CD8-positive, alpha-beta memory T cell (primary cell): ENCODE measurements at regions of chr11 and their contacts with region 1.

Region 1: DNA sequence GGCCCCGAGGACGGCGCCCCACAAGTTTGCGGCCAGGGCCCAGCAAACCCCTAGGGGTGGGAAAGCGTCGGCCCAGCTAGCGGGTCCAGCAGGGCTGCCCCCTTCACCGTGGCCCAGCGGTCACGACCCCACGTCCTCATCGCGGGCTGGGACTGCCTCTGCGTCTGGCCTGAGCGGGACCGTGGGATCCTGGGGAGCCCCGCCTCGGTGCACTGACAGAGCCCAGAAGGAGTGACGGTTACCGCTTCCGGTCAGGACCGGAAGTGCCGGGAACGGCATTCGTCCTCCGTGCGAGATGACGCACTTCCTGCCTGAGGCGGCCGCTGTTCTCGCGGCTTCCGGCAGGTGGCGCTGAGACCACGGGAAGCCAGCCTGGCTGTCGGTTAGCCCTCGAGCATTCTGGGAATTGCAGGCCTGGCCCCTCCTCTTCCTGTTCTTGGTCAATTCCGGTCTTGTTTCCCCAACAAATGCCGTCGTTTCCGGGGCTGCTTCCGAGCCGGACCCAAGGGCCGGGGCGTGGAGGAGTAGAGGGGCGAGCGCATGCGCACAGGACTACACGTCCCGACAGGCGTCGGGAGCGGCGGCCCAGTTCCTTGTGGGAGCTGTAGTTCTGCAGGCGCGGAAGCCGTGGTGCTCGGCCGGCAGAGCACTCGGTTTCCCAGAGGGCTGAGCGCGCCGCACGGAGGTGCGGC is at the start of gene TSSC4:
- DNase-seq: peak; percentile 99 to 100 (median 100)
- H3K4me3 ChIP-seq: peak within 1 kb of the TSS; percentile 89
- H3K4me3 Mint-ChIP-seq: peak within 1 kb of the TSS; percentile 88 to 99 (median 91)
- H3K27ac ChIP-seq: peak within 1 kb of the TSS; percentile 97
- H3K27ac Mint-ChIP-seq: peak within 1 kb of the TSS; percentile 90 to 98 (median 96)
- H3K4me1 ChIP-seq: peaks cover 24% of the 10 kb centered on the region
- H3K4me1 Mint-ChIP-seq: peaks cover 10 to 34% (median 15%) of the 10 kb centered on the region in 3 donors
- H3K27me3 ChIP-seq: no peaks in the 10 kb centered on the region
- H3K27me3 Mint-ChIP-seq: peaks cover 0 to 3% of the 10 kb centered on the region in 2 donors
- total RNA-seq, gene TSSC4: 79.6 to 84.1 TPM

Region 2: DNA sequence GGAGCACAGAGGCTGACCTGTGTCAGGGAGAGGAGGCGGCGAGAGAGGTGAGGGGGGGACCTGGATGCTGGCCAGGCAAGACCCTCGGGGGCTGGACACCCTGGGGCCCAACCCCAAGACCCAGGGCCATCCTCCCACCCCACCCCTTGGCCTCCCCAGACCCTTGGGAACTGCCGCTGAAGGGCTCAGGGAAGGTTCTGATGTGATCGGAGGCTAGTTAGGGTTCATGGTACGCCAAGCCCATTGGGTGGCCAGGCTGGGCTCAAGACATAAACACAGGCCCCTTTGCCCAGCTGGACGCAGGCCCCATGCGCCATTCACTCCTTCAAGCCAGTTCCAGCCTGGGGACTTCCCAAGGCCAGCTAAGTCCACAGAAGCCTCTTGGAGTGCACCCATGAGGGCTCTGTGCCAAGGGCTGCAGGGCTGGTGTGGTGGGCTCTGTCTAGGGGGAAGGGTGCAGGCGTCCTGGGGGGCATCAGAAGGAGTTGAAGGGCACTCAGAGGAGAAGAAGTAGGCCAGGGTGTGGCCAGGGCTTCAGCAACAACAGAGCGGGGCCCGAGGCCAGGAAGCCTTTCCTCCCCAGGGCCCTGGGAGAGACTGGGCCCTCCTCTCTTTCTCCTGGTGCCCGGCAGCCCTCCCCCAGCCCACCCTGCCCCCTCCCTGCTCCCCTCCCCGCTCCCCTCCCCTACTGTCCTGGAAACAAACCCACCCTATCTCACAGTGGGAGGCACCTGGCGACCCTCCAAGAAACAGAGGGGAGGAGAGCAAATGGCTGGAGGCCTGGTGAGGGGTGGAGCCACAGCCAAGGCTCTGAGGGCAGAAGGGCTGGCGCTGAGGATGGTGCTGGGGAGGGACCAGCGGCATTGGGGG is 85.5 kb before region 1 on chr11:
- CTCF ChIA-PET with region 1: interaction called, 3 read pairs
- POLR2A ChIA-PET with region 1: interaction called, 10 read pairs
- DNase-seq: no peak
- H3K4me3 ChIP-seq: no peak overlapping the region
- H3K4me3 Mint-ChIP-seq: no peak overlapping the region
- H3K27ac ChIP-seq: no peak overlapping the region
- H3K27ac Mint-ChIP-seq: peak overlapping the region in 1 of 8 donors; percentile 51
- H3K4me1 ChIP-seq: no peaks in the 10 kb centered on the region
- H3K4me1 Mint-ChIP-seq: peaks cover 5 to 23% (median 6%) of the 10 kb centered on the region in 3 donors
- H3K27me3 ChIP-seq: no peaks in the 10 kb centered on the region
- H3K27me3 Mint-ChIP-seq: no peaks in the 10 kb centered on the region

Region 3: GRCh38 chr11:2377511-2378443 is 22.4 kb before region 1 on chr11:
- CTCF ChIA-PET with region 1: interaction called, 8 read pairs
- POLR2A ChIA-PET with region 1: interaction called, 26 read pairs
- DNase-seq: peak; percentile 46 to 78 (median 55)
- H3K4me3 ChIP-seq: peak overlapping the region; percentile 74
- H3K4me3 Mint-ChIP-seq: peak overlapping the region; percentile 80 to 93 (median 87)
- H3K27ac ChIP-seq: peak overlapping the region; percentile 79
- H3K27ac Mint-ChIP-seq: peak overlapping the region; percentile 6 to 92 (median 85)
- H3K4me1 ChIP-seq: peaks cover 27% of the 10 kb centered on the region
- H3K4me1 Mint-ChIP-seq: peaks cover 23 to 51% (median 34%) of the 10 kb centered on the region in 3 donors
- H3K27me3 ChIP-seq: no peaks in the 10 kb centered on the region
- H3K27me3 Mint-ChIP-seq: peaks cover 0 to 3% of the 10 kb centered on the region in 2 donors

Region 4: GRCh38 chr11:2382936-2383851 is 17.0 kb before region 1 on chr11:
- CTCF ChIA-PET with region 1: interaction called, 10 read pairs
- POLR2A ChIA-PET with region 1: interaction called, 26 read pairs
- DNase-seq: peak in 1 of 5 donors; percentile 43
- H3K4me3 ChIP-seq: no peak overlapping the region
- H3K4me3 Mint-ChIP-seq: peak overlapping the region in 4 of 7 donors; percentile 8 to 87 (median 46)
- H3K27ac ChIP-seq: no peak overlapping the region
- H3K27ac Mint-ChIP-seq: peak overlapping the region in 7 of 8 donors; percentile 33 to 84 (median 63)
- H3K4me1 ChIP-seq: peaks cover 71% of the 10 kb centered on the region
- H3K4me1 Mint-ChIP-seq: peaks cover 66 to 94% (median 71%) of the 10 kb centered on the region in 3 donors
- H3K27me3 ChIP-seq: no peaks in the 10 kb centered on the region
- H3K27me3 Mint-ChIP-seq: no peaks in the 10 kb centered on the region